ENCODE measurements at regions of chr4 and their contacts with region 1.

Region 1: GRCh38 chr4:69167300-69167699 is 47.2 kb downstream of the UGT2B11 start:
- DNase-seq: no peak
- H3K4me3 ChIP-seq: no peak overlapping the region
- H3K27ac ChIP-seq: no peak overlapping the region
- H3K4me1 ChIP-seq: peaks cover 0 to 4% (median 0%) of the 10 kb centered on the region in 4 donors
- H3K27me3 ChIP-seq: no peaks in the 10 kb centered on the region
- CTCF ChIP-seq: no peak
- EP300 ChIP-seq: no peak
- POLR2A ChIP-seq: no peak

Region 2: GRCh38 chr4:68498413-68499007 is 668.8 kb before region 1 on chr4:
- intact Hi-C with region 1: loop called (anchors 1 kb)
- DNase-seq: no peak
- H3K4me3 ChIP-seq: no peak overlapping the region
- H3K27ac ChIP-seq: no peak overlapping the region
- H3K4me1 ChIP-seq: no peaks in the 10 kb centered on the region
- H3K27me3 ChIP-seq: no peaks in the 10 kb centered on the region
- CTCF ChIP-seq: peak; percentile 14 to 84 (median 54)
- EP300 ChIP-seq: no peak
- POLR2A ChIP-seq: no peak